Panc1 (cell line): ENCODE measurements at regions of chr3 and their contacts with region 1.

Region 1: DNA sequence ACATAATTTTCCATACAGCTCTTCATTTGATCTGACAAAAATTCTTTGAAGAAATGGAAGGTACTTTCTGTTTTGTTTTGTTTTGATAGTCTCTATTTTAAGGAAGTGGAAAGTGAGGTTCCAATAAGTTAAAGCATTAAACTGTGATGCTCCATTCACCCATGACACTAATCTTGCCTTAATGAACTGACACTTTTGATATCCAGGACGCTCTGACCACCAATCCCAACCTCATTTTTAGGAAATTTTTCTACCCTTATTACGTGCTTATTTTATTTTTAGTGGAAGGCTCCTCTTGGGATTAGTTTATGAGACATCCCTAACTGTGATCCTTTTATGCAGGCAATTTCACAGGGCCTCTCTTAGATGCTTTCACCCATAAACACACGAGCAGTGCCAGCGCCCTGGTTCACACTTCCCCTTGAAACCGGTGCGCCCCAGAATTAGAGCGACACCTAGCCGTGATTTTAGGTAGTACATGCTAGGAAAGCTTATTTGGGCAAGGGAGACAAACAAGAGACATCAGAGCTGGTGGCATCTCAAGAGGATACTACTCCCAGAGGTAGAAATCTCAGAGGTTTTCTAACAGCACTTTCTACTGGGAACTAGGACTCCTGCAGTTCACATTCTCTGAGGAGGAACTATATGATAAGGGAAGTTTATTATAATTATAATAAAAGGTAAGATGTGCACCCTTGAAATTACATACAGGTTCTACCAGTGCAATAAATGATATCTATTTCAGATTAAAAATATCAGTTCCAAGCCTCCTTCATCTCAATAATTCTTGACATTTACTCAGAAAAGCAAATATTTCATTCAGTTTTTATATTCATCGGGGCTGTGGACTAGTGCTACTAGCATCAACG is 173.9 kb downstream of the SLC9A9 start:
- DNase-seq: peak; percentile 47
- ATAC-seq: peak; percentile 94
- H3K4me3 ChIP-seq: no peak overlapping the region
- H3K27ac ChIP-seq: no peak overlapping the region
- H3K4me1 ChIP-seq: no peaks in the 10 kb centered on the region
- H3K27me3 ChIP-seq: no peaks in the 10 kb centered on the region
- CTCF ChIP-seq: peak; percentile 98

Region 2: GRCh38 chr3:143056372-143056771 is 618.0 kb before region 1 on chr3:
- CTCF ChIA-PET with region 1: no interaction called
- POLR2A ChIA-PET with region 1: no interaction called
- in situ Hi-C with region 1: no loop called
- intact Hi-C with region 1: loop called (anchors 10 kb)
- DNase-seq: no peak
- ATAC-seq: no peak
- H3K4me3 ChIP-seq: no peak overlapping the region
- H3K27ac ChIP-seq: no peak overlapping the region
- H3K4me1 ChIP-seq: no peaks in the 10 kb centered on the region
- H3K27me3 ChIP-seq: no peaks in the 10 kb centered on the region
- CTCF ChIP-seq: no peak

Region 3: DNA sequence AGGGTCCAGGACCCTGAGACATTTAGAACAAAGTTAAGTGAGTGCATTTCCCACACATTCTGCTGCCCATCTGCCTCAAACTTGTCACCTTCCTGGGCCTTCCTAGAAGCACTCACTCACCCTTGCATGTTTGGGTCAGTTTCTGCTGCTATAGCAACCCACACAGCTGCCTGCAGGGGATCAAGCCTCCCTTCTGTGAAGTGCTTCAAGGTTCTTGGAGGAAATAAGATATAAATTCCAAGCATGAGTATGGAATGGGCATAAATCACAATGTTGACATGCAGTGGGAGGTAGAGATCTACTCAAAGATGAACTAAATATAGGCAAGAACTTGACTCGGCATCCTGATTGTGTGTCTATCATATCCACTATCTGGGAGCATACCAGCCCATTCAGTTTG is 33.5 kb after region 1 on chr3:
- CTCF ChIA-PET with region 1: no interaction called
- POLR2A ChIA-PET with region 1: no interaction called
- in situ Hi-C with region 1: no loop called
- intact Hi-C with region 1: no loop called
- DNase-seq: no peak
- ATAC-seq: no peak
- H3K4me3 ChIP-seq: no peak overlapping the region
- H3K27ac ChIP-seq: no peak overlapping the region
- H3K4me1 ChIP-seq: no peaks in the 10 kb centered on the region
- H3K27me3 ChIP-seq: no peaks in the 10 kb centered on the region
- CTCF ChIP-seq: no peak